H1 (cell line): ENCODE measurements at regions of chr12 and their contacts with region 1.

Region 1: GRCh38 chr12:79935021-79935623 is at the start of gene PPP1R12A:
- DNase-seq: peak; percentile 94
- H3K4me3 ChIP-seq: peak within 1 kb of the TSS; percentile 86 to 96 (median 90)
- H3K27ac ChIP-seq: peak within 1 kb of the TSS; percentile 97
- H3K4me1 ChIP-seq: peaks cover 0 to 4% (median 1%) of the 10 kb centered on the region in 4 experiments; a peak in 3 of 7 replicates
- H3K27me3 ChIP-seq: no peaks in the 10 kb centered on the region
- CTCF ChIP-seq: no peak
- EP300 ChIP-seq: no peak
- POLR2A ChIP-seq: peak; percentile 94 to 95
- RAD21 ChIP-seq: peak; percentile 9 to 20; a peak in 1 of 4 replicates
- total RNA-seq, gene PPP1R12A: 81.5 and 82.7 TPM in 2 replicates

Region 2: DNA sequence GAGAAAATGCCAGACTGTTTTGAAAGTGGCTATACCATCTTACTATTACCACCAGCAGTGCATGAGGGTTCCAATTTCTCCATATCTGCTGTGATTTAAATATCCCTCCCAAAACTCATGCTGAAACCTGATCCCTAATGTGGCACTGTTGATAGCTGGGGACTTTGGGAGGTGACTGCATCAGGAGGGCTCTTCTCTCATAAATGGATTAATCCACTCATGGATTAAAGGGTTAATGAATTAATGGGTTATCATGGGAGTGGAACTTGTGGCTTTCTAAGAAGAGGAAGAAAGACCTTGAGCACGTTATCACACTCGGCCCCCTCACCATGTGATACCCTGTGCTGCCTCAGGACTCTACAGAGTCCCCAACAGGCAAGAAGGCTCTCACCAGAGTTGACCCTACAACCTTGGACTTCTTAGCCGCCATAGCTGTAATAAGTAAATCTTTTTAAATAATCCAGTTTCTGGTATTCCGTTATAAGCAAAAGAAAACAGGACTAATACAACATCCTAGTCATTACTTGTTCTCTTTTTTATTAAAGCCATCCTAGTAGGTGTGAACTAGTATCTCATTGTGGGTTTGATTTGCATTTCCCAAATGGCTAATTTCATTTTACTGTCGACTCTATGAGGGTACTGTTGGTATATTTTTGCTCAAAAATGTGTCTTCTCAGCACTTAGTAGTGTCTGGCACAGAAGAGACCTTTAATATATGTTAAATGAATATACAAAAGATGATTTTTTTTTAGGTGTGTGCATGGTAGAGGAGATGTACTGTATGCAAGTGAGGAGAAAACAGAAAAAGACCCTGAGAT is 14.5 kb before region 1 on chr12:
- CTCF ChIA-PET with region 1: no interaction called
- POLR2A ChIA-PET with region 1: interaction called, 13 read pairs
- DNase-seq: no peak
- H3K4me3 ChIP-seq: no peak overlapping the region
- H3K27ac ChIP-seq: no peak overlapping the region
- H3K4me1 ChIP-seq: peaks cover 0 to 2% (median 0%) of the 10 kb centered on the region in 4 experiments; a peak in 2 of 7 replicates
- H3K27me3 ChIP-seq: no peaks in the 10 kb centered on the region
- CTCF ChIP-seq: no peak
- EP300 ChIP-seq: no peak
- POLR2A ChIP-seq: no peak
- RAD21 ChIP-seq: no peak